Heart left ventricle (tissue), 16 donors: ENCODE measurements at regions of chr12 and their contacts with region 1.

Region 1: GRCh38 chr12:14365294-14366208 is at the start of gene ATF7IP:
- DNase-seq: peak; percentile 96 to 97 (median 97)
- ATAC-seq: peak; percentile 97 to 99 (median 98)
- H3K4me3 ChIP-seq: peak within 1 kb of the TSS; percentile 52 to 84 (median 69)
- H3K27ac ChIP-seq: peak within 1 kb of the TSS; percentile 90 to 98 (median 95)
- H3K4me1 ChIP-seq: peaks cover 0 to 25% (median 7%) of the 10 kb centered on the region in 12 donors
- H3K27me3 ChIP-seq: no peaks in the 10 kb centered on the region
- CTCF ChIP-seq: peak in 9 of 12 donors; percentile 21 to 59 (median 34)
- POLR2A ChIP-seq: peak in 1 of 2 donors; percentile 85
- total RNA-seq, gene ATF7IP: 39.8 to 82.4 (median 63.6) TPM

Region 2: DNA sequence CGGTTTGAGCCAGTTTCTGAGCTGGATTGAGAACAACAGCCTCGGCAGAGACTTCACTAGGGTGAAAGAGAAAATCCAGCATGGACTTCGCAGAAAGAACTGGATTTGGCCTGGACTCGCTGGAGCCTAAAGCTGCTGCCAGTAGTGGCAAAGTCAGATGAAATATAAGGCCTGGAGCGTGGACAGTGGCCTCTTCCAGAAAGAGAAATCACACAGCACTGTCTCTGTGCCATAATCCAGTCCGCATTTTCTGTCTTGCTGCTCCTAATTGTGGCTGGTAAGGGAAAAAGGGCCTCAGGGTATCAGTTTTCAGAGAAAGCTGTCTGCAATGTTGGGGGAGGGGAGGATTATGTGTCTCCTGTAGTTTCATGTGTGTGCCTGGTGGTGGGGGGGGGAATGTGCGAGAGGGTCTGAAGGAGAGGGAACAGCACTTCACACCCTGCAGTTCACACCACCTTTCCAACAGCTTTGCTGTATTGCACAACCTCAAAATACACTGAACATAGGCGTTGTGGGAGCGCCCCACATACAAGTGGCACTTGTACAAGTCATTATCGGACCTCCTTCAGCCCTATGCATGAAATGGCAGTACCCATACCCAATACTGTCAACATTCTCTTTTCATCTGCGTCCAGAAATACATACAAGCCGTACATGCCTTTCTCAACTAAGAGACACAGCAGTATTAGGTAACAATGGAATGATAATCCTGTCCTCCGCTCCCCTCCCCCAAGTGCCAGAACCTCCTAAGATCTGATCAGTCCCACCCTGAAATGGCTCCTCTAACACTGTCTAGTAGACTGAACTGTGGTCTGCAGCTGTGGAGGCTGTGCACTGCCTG is 107.6 kb before region 1 on chr12:
- intact Hi-C with region 1: loop called (anchors 1 to 5 kb)
- DNase-seq: peak in 4 of 5 donors; percentile 94 to 97 (median 94)
- ATAC-seq: peak; percentile 82 to 87 (median 85)
- H3K4me3 ChIP-seq: peak overlapping the region in 8 of 12 donors; percentile 8 to 38 (median 26)
- H3K27ac ChIP-seq: peak overlapping the region; percentile 85 to 98 (median 88)
- H3K4me1 ChIP-seq: peaks cover 4 to 80% (median 46%) of the 10 kb centered on the region in 12 donors
- H3K27me3 ChIP-seq: peaks cover 0 to 3% (median 0%) of the 10 kb centered on the region in 9 donors
- CTCF ChIP-seq: peak in 1 of 12 donors; percentile 8
- POLR2A ChIP-seq: peak in 1 of 2 donors; percentile 53

Region 3: GRCh38 chr12:14403711-14404196 is 38.2 kb after region 1 on chr12:
- intact Hi-C with region 1: loop called in 1 of 10 experiments (anchors 5 kb)
- DNase-seq: peak in 2 of 5 donors; percentile 33 to 53
- ATAC-seq: peak; percentile 87 to 93 (median 90)
- H3K4me3 ChIP-seq: peak overlapping the region in 2 of 12 donors; percentile 8 to 14
- H3K27ac ChIP-seq: peak overlapping the region in 10 of 12 donors; percentile 17 to 68 (median 38)
- H3K4me1 ChIP-seq: peaks cover 6 to 55% (median 24%) of the 10 kb centered on the region in 12 donors
- H3K27me3 ChIP-seq: no peaks in the 10 kb centered on the region
- CTCF ChIP-seq: no peak
- POLR2A ChIP-seq: no peak

Region 4: GRCh38 chr12:14567351-14568162 is 202.0 kb after region 1 on chr12 and contains the start of gene PLBD1:
- intact Hi-C with region 1: loop called in 1 of 10 experiments (anchors 10 kb)
- DNase-seq: peak; percentile 77 to 91 (median 88)
- ATAC-seq: peak; percentile 81 to 95 (median 92)
- H3K4me3 ChIP-seq: peak within 1 kb of the TSS; percentile 45 to 79 (median 68)
- H3K27ac ChIP-seq: peak within 1 kb of the TSS; percentile 67 to 97 (median 92)
- H3K4me1 ChIP-seq: peaks cover 0 to 33% (median 3%) of the 10 kb centered on the region in 12 donors
- H3K27me3 ChIP-seq: no peaks in the 10 kb centered on the region
- CTCF ChIP-seq: peak in 1 of 12 donors; percentile 11
- POLR2A ChIP-seq: peak in 1 of 2 donors; percentile 78
- total RNA-seq, gene PLBD1: 11.9 to 49.1 (median 26.5) TPM